Ascending aorta (tissue), 2 donors: ENCODE measurements at regions of chr1 and their contacts with region 1.

Region 1: GRCh38 chr1:203408486-203409427 is 57.8 kb upstream of the FMOD start:
- DNase-seq: peak; percentile 78 to 94
- H3K4me3 ChIP-seq: no peak overlapping the region
- H3K27ac ChIP-seq: peak overlapping the region; percentile 92 to 97
- H3K4me1 ChIP-seq: peaks cover 37 to 56% of the 10 kb centered on the region in 2 donors
- H3K27me3 ChIP-seq: no peaks in the 10 kb centered on the region
- CTCF ChIP-seq: no peak

Region 2: GRCh38 chr1:203006948-203007871 is 401.5 kb before region 1 on chr1 and contains the start of gene TMEM183A:
- intact Hi-C with region 1: no loop called
- DNase-seq: peak; percentile 83 to 97
- H3K4me3 ChIP-seq: peak within 1 kb of the TSS; percentile 78 to 89
- H3K27ac ChIP-seq: peak within 1 kb of the TSS; percentile 79 to 95
- H3K4me1 ChIP-seq: peaks cover 6 to 14% of the 10 kb centered on the region in 2 donors
- H3K27me3 ChIP-seq: no peaks in the 10 kb centered on the region
- CTCF ChIP-seq: no peak
- total RNA-seq, gene TMEM183A: 44.6 TPM

Region 3: GRCh38 chr1:203316626-203317093 is 92.1 kb before region 1 on chr1:
- intact Hi-C with region 1: no loop called
- DNase-seq: no peak
- H3K4me3 ChIP-seq: no peak overlapping the region
- H3K27ac ChIP-seq: peak overlapping the region; percentile 60 to 73
- H3K4me1 ChIP-seq: peaks cover 0 to 6% of the 10 kb centered on the region in 2 donors
- H3K27me3 ChIP-seq: no peaks in the 10 kb centered on the region
- CTCF ChIP-seq: no peak

Region 4: GRCh38 chr1:203351037-203352013 is 57.4 kb before region 1 on chr1 and contains the start of gene FMOD:
- intact Hi-C with region 1: loop called (anchors 2 kb)
- DNase-seq: peak in 1 of 2 donors; percentile 91
- H3K4me3 ChIP-seq: peak within 1 kb of the TSS; percentile 41 to 65
- H3K27ac ChIP-seq: peak within 1 kb of the TSS; percentile 83 to 84
- H3K4me1 ChIP-seq: peaks cover 3 to 35% of the 10 kb centered on the region in 2 donors
- H3K27me3 ChIP-seq: no peaks in the 10 kb centered on the region
- CTCF ChIP-seq: peak in 1 of 3 experiments; percentile 9
- total RNA-seq, gene FMOD: 92.3 TPM

Region 5: GRCh38 chr1:203480525-203481084 is 71.8 kb after region 1 on chr1:
- intact Hi-C with region 1: loop called (anchors 2 kb)
- DNase-seq: peak; percentile 27 to 94
- H3K4me3 ChIP-seq: peak overlapping the region; percentile 56 to 63
- H3K27ac ChIP-seq: peak overlapping the region; percentile 88 to 92
- H3K4me1 ChIP-seq: peaks cover 27 to 47% of the 10 kb centered on the region in 2 donors
- H3K27me3 ChIP-seq: no peaks in the 10 kb centered on the region
- CTCF ChIP-seq: no peak

Region 6: DNA sequence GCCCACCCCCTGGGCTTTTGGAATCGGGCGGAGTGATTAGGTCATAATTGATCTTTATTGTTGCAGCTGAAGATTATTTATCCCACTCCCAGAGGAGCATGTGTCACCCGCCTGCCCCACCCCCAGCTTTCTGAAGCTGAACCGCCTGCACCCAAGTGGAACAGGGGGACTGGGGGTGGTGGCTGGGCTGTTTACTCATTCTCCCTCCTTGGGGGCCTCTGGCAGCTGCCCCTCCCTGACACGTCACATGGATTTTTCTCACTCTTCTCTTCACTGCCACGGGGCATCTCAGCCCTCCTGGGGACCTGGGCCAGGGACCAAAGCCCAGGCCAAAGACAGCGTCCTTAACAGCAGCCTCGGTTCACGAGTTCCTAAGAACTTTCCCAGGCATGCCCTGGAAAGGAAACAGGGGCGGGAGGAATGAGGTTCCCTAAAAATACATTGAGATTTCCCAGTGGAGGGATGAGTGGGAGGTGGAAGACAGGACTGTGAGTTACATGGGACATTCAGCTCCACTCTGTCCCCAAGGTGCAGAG is 632.5 kb after region 1 on chr1:
- intact Hi-C with region 1: no loop called
- DNase-seq: peak in 1 of 2 donors; percentile 64
- H3K4me3 ChIP-seq: no peak overlapping the region
- H3K27ac ChIP-seq: peak overlapping the region in 1 of 2 donors; percentile 17
- H3K4me1 ChIP-seq: peaks cover 0 to 6% of the 10 kb centered on the region in 2 donors
- H3K27me3 ChIP-seq: no peaks in the 10 kb centered on the region
- CTCF ChIP-seq: no peak